AG04449 (cell line): ENCODE measurements at regions of chr15 and their contacts with region 1.

Region 1: DNA sequence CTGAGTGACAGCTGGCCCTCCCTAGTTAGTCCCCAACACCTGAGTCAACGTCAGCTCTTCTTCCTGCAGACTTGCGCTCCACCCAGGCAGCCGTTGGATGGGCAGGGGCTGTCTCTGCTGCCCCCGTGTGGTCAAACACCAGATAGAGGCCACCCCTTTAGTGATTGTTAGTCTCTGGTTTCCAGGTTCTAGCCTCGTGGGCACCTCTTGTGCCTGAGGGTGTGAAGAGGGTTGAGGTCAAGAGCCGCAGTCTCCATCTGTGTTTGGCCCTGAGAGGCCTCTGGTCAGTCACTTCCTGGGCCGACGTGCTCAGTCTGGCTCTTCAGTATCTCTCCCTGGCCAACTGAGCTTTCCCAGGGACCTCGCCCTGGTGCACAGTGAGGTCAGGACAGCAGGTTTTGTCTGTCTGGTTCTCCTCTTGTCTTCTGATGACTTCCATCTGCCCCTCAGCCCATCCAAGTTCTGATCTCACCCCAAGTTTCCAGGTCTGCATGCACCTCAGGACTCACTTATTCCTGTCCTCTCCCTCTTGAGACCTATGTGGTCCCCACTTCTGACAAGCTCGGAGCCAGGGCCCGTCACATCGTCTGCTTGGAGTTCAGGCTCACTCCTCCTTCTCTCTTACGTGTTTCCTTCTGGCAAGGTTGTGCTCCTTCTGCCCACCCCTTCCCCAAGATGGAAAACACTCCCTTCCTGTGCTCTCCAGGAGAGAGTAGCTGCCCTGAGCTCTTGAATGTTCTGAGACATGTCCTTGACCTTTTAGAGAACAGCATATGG is 20.9 kb downstream of the CD276 start:
- DNase-seq: no peak
- H3K4me3 ChIP-seq: no peak overlapping the region
- CTCF ChIP-seq: peak; percentile 85

Region 2: DNA sequence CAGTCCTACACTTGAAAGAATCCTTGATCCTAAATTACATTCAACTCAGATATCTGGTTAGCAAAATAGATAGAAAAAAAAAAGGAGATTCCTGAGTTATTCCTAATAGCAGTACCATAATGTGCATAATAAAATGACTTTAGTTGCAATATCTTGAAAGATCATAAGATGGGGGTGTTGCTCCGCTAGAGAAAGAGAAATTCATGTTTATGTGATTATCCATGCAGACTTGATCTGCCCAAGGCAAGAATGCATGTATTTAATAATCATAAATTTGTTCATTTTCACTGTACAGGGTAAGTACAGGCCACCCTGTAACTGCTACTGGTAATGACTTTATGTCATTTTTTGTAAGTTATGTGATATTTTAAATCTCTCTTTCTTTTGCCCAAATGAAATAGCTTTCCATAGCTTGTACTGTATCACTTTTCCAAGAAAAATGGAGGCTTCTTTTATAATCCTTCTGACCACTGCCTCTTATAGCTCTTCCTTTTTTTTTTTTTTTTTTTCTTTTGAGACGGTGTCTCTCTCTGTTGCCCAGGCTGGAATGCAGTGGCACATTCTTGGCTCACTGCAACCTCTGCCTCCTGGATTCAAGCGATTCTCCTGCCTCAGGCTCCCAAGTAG is 420.9 kb before region 1 on chr15:
- CTCF ChIA-PET with region 1: interaction called, 27 read pairs
- POLR2A ChIA-PET with region 1: no interaction called
- DNase-seq: no peak
- H3K4me3 ChIP-seq: no peak overlapping the region
- CTCF ChIP-seq: peak; percentile 27

Region 3: GRCh38 chr15:73677146-73677607 is 27.9 kb before region 1 on chr15:
- CTCF ChIA-PET with region 1: interaction called, 378 read pairs
- POLR2A ChIA-PET with region 1: no interaction called
- DNase-seq: no peak
- H3K4me3 ChIP-seq: no peak overlapping the region
- CTCF ChIP-seq: peak; percentile 81

Region 4: GRCh38 chr15:73717802-73718201 is 12.7 kb after region 1 on chr15:
- CTCF ChIA-PET with region 1: interaction called, 65 read pairs
- POLR2A ChIA-PET with region 1: interaction called, 3 read pairs
- DNase-seq: no peak
- H3K4me3 ChIP-seq: no peak overlapping the region
- CTCF ChIP-seq: no peak

Region 5: GRCh38 chr15:73781038-73781925 is 76.2 kb after region 1 on chr15:
- CTCF ChIA-PET with region 1: interaction called, 11 read pairs
- POLR2A ChIA-PET with region 1: no interaction called
- DNase-seq: no peak
- H3K4me3 ChIP-seq: no peak overlapping the region
- CTCF ChIP-seq: peak; percentile 22